K562 (cell line): ENCODE measurements at regions of chr9 and their contacts with region 1.

Region 1: GRCh38 chr9:19230356-19231125 is at the start of gene DENND4C:
- DNase-seq: peak; percentile 82 to 90 (median 84)
- ATAC-seq: peak; percentile 89
- H3K4me3 ChIP-seq: peak within 1 kb of the TSS; percentile 92
- H3K27ac ChIP-seq: peak within 1 kb of the TSS; percentile 95
- H3K4me1 ChIP-seq: peaks cover 0 to 9% of the 10 kb centered on the region in 2 experiments; a peak in 3 of 5 replicates
- H3K27me3 ChIP-seq: no peaks in the 10 kb centered on the region
- CTCF ChIP-seq: peak in 2 of 3 experiments; percentile 2 to 8; a peak in 2 of 6 replicates
- EP300 ChIP-seq: no peak
- POLR2A ChIP-seq: peak; percentile 74
- RAD21 ChIP-seq: 0 out of 4 replicates have a peak, but pooled peaks of 1 of the 2 experiments have one; percentile 6
- polyA plus RNA-seq, gene DENND4C: 4.8 to 6.7 TPM

Region 2: GRCh38 chr9:19161257-19162025 is 69.1 kb before region 1 on chr9:
- CTCF ChIA-PET with region 1: no interaction called
- POLR2A ChIA-PET with region 1: no interaction called
- in situ Hi-C with region 1: no loop called
- intact Hi-C with region 1: loop called (anchors 5 kb)
- DNase-seq: peak; percentile 20 to 77 (median 38)
- ATAC-seq: peak; percentile 84
- H3K4me3 ChIP-seq: no peak overlapping the region
- H3K27ac ChIP-seq: peak overlapping the region; percentile 79
- H3K4me1 ChIP-seq: peaks cover 12 to 13% of the 10 kb centered on the region in 2 experiments; a peak in 4 of 5 replicates
- H3K27me3 ChIP-seq: no peaks in the 10 kb centered on the region
- CTCF ChIP-seq: no peak
- EP300 ChIP-seq: peak; percentile 96
- POLR2A ChIP-seq: no peak
- RAD21 ChIP-seq: no peak; a peak in 1 of 4 replicates

Region 3: DNA sequence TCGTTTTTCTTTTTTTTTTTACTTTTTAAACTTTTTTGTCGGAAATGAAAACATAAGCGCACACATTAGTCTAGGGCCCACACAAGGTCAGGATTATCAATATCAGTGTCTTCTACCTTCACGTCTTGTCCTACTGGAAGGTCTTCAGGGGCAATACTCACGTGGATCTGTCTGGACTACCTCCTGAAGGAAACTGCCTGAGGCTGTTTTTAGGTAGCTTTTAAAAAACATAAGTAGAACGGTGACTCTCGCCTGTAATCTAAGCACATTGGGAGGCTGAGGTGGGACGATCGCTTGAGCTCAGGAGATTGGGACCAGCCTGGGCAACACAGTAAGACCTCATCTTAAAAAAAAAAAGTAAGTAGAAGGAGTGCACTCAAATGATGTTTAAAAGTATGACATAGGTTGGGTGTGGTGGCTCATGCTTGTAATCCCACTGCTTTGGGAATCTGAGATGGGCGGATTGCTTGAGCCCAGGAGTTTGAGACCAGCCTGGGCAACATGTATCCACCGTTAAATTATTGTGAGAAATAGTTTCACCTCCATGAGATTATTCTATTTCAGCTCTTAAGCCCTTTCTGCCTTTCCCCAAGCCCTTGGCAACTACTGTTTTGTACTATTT is 11.1 kb after region 1 on chr9:
- CTCF ChIA-PET with region 1: no interaction called
- POLR2A ChIA-PET with region 1: interaction called, 22 read pairs
- in situ Hi-C with region 1: no loop called
- intact Hi-C with region 1: no loop called
- DNase-seq: no peak
- ATAC-seq: no peak; the same call in 1 of the 3 replicates
- H3K4me3 ChIP-seq: no peak overlapping the region
- H3K27ac ChIP-seq: no peak overlapping the region
- H3K4me1 ChIP-seq: peaks cover 0 to 2% of the 10 kb centered on the region in 2 experiments; a peak in 1 of 5 replicates
- H3K27me3 ChIP-seq: no peaks in the 10 kb centered on the region
- CTCF ChIP-seq: no peak
- EP300 ChIP-seq: no peak
- POLR2A ChIP-seq: no peak
- RAD21 ChIP-seq: no peak

Region 4: GRCh38 chr9:19379697-19380046 is 149.1 kb after region 1 on chr9:
- CTCF ChIA-PET with region 1: no interaction called
- POLR2A ChIA-PET with region 1: no interaction called
- in situ Hi-C with region 1: no loop called
- intact Hi-C with region 1: loop called (anchors 5 kb)
- DNase-seq: peak in 3 of 4 experiments; percentile 22 to 44 (median 43)
- ATAC-seq: peak; percentile 38
- H3K4me3 ChIP-seq: peak overlapping the region; percentile 92
- H3K27ac ChIP-seq: peak overlapping the region; percentile 88
- H3K4me1 ChIP-seq: peaks cover 0 to 4% of the 10 kb centered on the region in 2 experiments; a peak in 2 of 5 replicates
- H3K27me3 ChIP-seq: no peaks in the 10 kb centered on the region
- CTCF ChIP-seq: no peak
- EP300 ChIP-seq: no peak
- POLR2A ChIP-seq: no peak
- RAD21 ChIP-seq: no peak